BJ (cell line): ENCODE measurements at regions of chr12 and their contacts with region 1.

Region 1: GRCh38 chr12:62205346-62205745 is 54.9 kb upstream of the USP15 start:
- DNase-seq: no peak
- H3K4me3 ChIP-seq: no peak overlapping the region
- H3K27me3 ChIP-seq: no peaks in the 10 kb centered on the region
- CTCF ChIP-seq: no peak

Region 2: GRCh38 chr12:62123721-62124203 is 81.6 kb before region 1 on chr12:
- CTCF ChIA-PET with region 1: no interaction called
- POLR2A ChIA-PET with region 1: no interaction called
- DNase-seq: no peak
- H3K4me3 ChIP-seq: no peak overlapping the region
- H3K27me3 ChIP-seq: no peaks in the 10 kb centered on the region
- CTCF ChIP-seq: peak; percentile 88

Region 3: DNA sequence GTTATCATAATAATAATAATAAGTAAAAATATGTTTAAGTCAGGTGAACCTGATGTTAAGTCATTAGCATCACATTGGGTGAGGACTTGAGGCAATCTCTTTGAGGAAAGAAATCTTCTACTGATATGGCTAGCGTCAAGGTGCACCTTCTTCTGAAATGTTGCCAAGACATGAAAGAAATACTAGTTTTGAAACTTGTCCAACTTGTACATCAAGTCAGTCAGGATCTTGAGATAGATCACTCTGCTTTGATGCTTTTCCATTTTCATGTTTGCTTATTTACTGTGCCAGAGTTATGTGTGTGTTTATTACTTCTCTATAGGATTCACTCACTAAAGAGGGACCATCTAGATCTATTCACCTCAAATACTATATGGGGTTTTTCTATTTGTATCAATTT is 35.1 kb before region 1 on chr12:
- CTCF ChIA-PET with region 1: no interaction called
- POLR2A ChIA-PET with region 1: no interaction called
- DNase-seq: no peak
- H3K4me3 ChIP-seq: no peak overlapping the region
- H3K27me3 ChIP-seq: no peaks in the 10 kb centered on the region
- CTCF ChIP-seq: no peak

Region 4: GRCh38 chr12:62192180-62192902 is 13.0 kb before region 1 on chr12:
- CTCF ChIA-PET with region 1: interaction called, 29 read pairs
- POLR2A ChIA-PET with region 1: no interaction called
- DNase-seq: peak; percentile 46
- H3K4me3 ChIP-seq: peak overlapping the region; percentile 27
- H3K27me3 ChIP-seq: peaks cover 25% of the 10 kb centered on the region
- CTCF ChIP-seq: peak; percentile 66

Region 5: GRCh38 chr12:63305901-63306875 is 1100.8 kb after region 1 on chr12:
- CTCF ChIA-PET with region 1: no interaction called
- POLR2A ChIA-PET with region 1: no interaction called
- DNase-seq: no peak
- H3K4me3 ChIP-seq: no peak overlapping the region
- H3K27me3 ChIP-seq: no peaks in the 10 kb centered on the region
- CTCF ChIP-seq: no peak